ENCODE measurements at regions of chr12 and their contacts with region 1.

Region 1: GRCh38 chr12:124053851-124054250 is 80.8 kb downstream of the ZNF664 start:
- DNase-seq: no peak
- ATAC-seq: peak; percentile 84

Region 2: DNA sequence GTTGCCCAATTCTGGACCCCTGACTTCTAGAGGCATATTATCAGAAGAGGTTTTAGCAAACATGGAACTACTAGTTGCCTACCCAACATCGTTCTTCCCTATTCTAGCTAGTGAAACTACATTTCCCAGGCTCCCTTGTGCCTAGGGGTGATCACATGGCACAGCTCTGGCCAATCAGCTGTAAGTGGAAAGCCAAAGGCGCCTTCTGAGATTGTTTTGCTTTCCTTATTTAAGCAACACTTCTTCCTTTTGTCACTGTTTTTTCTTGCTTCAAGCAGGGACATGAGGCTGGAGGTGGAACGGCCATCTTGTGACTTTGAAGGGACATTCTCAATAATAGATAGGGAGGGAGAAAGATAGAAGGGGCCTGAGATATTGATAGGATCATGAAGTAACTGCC is 55.9 kb after region 1 on chr12:
- intact Hi-C with region 1: no loop called
- DNase-seq: no peak
- ATAC-seq: no peak

Region 3: GRCh38 chr12:124321040-124321481 is 267.2 kb after region 1 on chr12:
- intact Hi-C with region 1: loop called (anchors 1 kb)
- DNase-seq: no peak
- ATAC-seq: peak; percentile 73

Region 4: DNA sequence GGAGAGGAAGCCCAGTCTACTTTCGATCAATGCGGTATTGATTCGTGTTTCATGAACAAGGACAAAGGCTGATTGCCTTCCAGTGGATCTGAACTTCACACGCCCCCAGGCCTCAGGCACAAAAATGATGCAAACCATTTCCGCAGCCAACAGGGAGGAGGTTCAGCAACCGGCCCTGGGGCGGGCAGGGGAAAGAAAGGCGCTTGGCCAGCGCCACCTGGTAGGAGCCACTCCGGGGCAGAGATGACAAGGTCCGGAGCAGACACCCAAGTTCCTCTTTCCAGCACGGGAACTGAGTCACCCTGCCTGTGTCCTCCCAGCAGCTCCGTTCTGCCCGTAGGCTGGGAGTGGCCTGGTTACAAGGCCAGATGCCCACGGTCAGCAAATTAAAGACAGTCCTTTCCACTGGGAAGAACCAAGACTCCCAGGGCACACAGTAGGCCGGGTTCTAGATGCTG is 673.4 kb after region 1 on chr12:
- intact Hi-C with region 1: loop called (anchors 5 kb)
- DNase-seq: peak; percentile 91
- ATAC-seq: peak; percentile 76